CD4-positive, alpha-beta memory T cell (primary cell): ENCODE measurements at regions of chr5 and their contacts with region 1.

Region 1: GRCh38 chr5:138213161-138214029 is at the start of gene CDC23:
- DNase-seq: peak; percentile 91 to 96 (median 94)
- H3K4me3 ChIP-seq: peak within 1 kb of the TSS; percentile 97 to 100
- H3K4me3 Mint-ChIP-seq: peak within 1 kb of the TSS; percentile 97 to 100 (median 98)
- H3K27ac ChIP-seq: peak within 1 kb of the TSS; percentile 85
- H3K27ac Mint-ChIP-seq: peak within 1 kb of the TSS; percentile 88 to 98 (median 97)
- H3K4me1 ChIP-seq: peaks cover 25% of the 10 kb centered on the region
- H3K4me1 Mint-ChIP-seq: peaks cover 13 to 29% (median 21%) of the 10 kb centered on the region in 4 donors
- H3K27me3 ChIP-seq: no peaks in the 10 kb centered on the region
- H3K27me3 Mint-ChIP-seq: peaks cover 0 to 2% of the 10 kb centered on the region in 2 donors
- total RNA-seq, gene CDC23: 31.9 to 32.5 TPM

Region 2: DNA sequence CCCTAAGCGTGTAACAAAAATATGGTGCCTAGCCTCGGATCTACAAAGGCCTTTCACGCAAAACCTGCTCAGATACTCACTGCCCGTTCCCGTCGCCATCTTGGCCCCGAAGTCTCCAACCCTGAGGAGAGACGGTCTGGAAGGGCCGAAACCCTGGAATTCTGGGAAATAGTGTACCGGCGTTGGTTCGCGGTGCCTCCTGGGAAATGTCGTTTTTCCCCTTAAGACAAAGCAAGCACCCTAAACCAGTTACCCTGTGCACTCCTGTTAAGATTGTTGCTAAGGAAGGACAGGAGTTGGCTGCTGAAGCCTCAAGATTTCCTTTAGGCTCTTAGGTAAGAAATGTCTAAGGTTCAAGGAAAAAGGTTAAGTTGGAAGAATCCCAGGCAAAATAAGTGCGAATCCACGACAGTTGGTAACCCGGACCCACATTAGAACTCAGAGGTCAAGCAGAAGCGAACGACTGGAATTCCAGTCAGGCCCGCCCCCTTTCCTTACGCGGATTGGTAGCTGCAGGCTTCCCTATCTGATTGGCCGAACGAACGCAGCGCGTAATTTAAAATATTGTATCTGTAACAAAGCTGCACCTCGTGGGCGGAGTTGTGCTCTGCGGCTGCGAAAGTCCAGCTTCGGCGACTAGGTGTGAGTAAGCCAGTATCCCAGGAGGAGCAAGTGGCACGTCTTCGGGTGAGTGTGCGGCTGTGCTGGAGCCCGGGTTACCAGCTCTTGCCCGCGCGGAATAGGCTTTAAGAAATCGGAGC is 34.7 kb before region 1 on chr5 and contains the starts of genes BRD8 and KIF20A:
- CTCF ChIA-PET with region 1: no interaction called
- POLR2A ChIA-PET with region 1: interaction called, 8 read pairs
- intact Hi-C with region 1: loop called (anchors 1 kb)
- DNase-seq: peak; percentile 85 to 92 (median 88)
- H3K4me3 ChIP-seq: peak within 1 kb of the TSS; percentile 80 to 93
- H3K4me3 Mint-ChIP-seq: peak within 1 kb of the TSS in 1 of 8 donors; percentile 9
- H3K27ac ChIP-seq: peak within 1 kb of the TSS; percentile 72
- H3K27ac Mint-ChIP-seq: peak within 1 kb of the TSS in 2 of 7 donors; percentile 16 to 55
- H3K4me1 ChIP-seq: peaks cover 17% of the 10 kb centered on the region
- H3K4me1 Mint-ChIP-seq: peaks cover 4 to 17% (median 11%) of the 10 kb centered on the region in 4 donors
- H3K27me3 ChIP-seq: no peaks in the 10 kb centered on the region
- H3K27me3 Mint-ChIP-seq: no peaks in the 10 kb centered on the region
- total RNA-seq, gene BRD8: 93.7 to 97.3 TPM
- total RNA-seq, gene KIF20A: not detected

Region 3: GRCh38 chr5:138331449-138332368 is 118.3 kb after region 1 on chr5 and contains the start of gene CDC25C:
- CTCF ChIA-PET with region 1: no interaction called
- POLR2A ChIA-PET with region 1: interaction called, 3 read pairs
- intact Hi-C with region 1: loop called (anchors 1 kb)
- DNase-seq: peak; percentile 94 to 99 (median 97)
- H3K4me3 ChIP-seq: peak within 1 kb of the TSS; percentile 43 to 71
- H3K4me3 Mint-ChIP-seq: peak within 1 kb of the TSS; percentile 77 to 90 (median 88)
- H3K27ac ChIP-seq: peak within 1 kb of the TSS; percentile 20
- H3K27ac Mint-ChIP-seq: peak within 1 kb of the TSS; percentile 36 to 92 (median 77)
- H3K4me1 ChIP-seq: peaks cover 13% of the 10 kb centered on the region
- H3K4me1 Mint-ChIP-seq: peaks cover 5 to 16% (median 11%) of the 10 kb centered on the region in 4 donors
- H3K27me3 ChIP-seq: no peaks in the 10 kb centered on the region
- H3K27me3 Mint-ChIP-seq: no peaks in the 10 kb centered on the region
- total RNA-seq, gene CDC25C: not detected